ENCODE measurements at regions of chr14 and their contacts with region 1.

Region 1: DNA sequence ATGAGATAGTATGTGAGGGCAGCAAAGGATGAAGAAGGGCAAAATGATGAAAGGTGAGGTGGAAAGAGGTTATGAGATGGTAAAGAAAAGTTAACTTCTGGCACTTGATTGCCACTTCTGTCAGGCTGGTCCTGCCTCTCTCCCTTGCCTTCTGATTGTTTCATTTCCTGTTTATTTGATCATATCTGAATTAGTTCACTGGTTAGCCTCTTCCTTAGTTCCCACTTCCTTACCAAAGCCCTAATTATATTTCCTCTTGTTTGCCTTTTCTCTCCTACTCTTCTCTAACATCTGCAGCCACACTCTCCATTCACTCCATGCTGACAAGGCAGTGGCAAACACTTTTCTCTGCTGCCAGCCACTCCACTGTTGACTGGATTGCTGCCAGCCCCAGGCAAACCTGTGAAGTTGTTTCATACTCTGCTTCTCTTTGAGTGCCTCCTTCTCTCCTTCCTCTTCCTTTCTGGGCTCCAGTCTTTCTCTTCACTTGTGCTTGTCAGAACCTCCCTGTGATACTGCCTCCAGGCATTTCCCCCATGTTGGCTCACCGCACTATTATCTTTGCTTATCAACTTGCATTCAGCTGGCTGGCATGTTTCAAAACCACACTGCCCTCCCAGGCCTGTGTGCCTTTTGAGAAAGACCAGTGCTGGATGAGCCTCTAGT is 8.1 kb downstream of the PNP start:
- DNase-seq: no peak
- H3K4me3 Mint-ChIP-seq: peak overlapping the region; percentile 51
- H3K27ac Mint-ChIP-seq: peak overlapping the region; percentile 72
- H3K4me1 Mint-ChIP-seq: peaks cover 36% of the 10 kb centered on the region
- H3K27me3 Mint-ChIP-seq: no peaks in the 10 kb centered on the region

Region 2: DNA sequence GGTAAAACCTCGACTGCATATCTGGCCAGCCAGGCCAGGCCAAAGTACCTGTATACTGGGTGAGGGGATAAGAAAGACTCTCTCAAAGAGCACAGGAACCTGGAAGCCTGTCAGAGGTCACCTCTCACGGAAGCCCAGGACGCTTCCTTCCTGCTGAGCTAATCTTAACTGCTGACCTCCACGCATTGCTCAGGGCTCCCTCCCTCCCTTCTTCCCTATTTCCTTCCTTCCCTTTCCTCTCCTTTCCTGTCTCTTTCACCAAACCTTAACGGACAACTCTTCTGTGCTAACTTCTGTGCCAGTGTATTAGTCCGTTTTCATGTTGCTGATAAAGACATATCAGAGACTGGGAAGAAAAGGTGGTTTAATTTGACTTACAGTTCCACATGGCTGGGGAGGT is 13.2 kb after region 1 on chr14:
- intact Hi-C with region 1: loop called (anchors 2 kb)
- DNase-seq: no peak
- H3K4me3 Mint-ChIP-seq: no peak overlapping the region
- H3K27ac Mint-ChIP-seq: peak overlapping the region; percentile 60
- H3K4me1 Mint-ChIP-seq: peaks cover 64% of the 10 kb centered on the region
- H3K27me3 Mint-ChIP-seq: no peaks in the 10 kb centered on the region

Region 3: DNA sequence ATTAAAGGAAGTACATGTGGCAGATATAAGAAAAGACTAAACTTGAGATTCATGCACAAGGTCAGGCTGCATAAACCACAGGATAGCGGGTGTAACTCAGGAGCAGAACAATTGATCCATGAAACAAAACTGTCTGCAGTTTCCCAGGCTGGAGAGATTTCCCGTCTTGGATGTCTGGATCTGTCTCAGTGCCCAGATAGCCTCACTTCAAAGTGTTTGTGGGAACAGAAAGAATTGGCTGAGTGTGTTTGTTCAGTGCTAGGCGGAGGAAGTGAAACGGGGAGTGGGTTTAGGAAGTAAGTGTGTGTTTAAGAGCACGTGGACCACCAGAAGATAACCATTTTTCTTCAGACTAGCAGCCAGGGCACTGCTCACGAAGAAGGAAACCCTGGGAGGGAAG is 26.6 kb after region 1 on chr14:
- intact Hi-C with region 1: no loop called
- DNase-seq: no peak
- H3K4me3 Mint-ChIP-seq: no peak overlapping the region
- H3K27ac Mint-ChIP-seq: no peak overlapping the region
- H3K4me1 Mint-ChIP-seq: peaks cover 2% of the 10 kb centered on the region
- H3K27me3 Mint-ChIP-seq: peaks cover 3% of the 10 kb centered on the region

Measured in activated T-helper 2 cell treated with anti-CD3 and anti-CD28 coated beads, Interferon-gamma antibody, Interleukin-2, Interleukin-4, amounts not matched to agents 10 μg/mL and 5 μg/mL and 100 μg/mL, durations not matched to agents 14 hours and 24 hours and 36 hours (primary cell).